B cell (primary cell): ENCODE measurements at regions of chr6 and their contacts with region 1.

Region 1: GRCh38 chr6:43013843-43014433 is at the starts of genes KLHDC3 and MEA1:
- DNase-seq: peak; percentile 99
- ATAC-seq: peak; percentile 97
- H3K4me3 ChIP-seq: peak within 1 kb of the TSS; percentile 61 to 79 (median 70)
- H3K4me3 Mint-ChIP-seq: peak within 1 kb of the TSS; percentile 91
- H3K27ac ChIP-seq: peak within 1 kb of the TSS; percentile 35 to 69
- H3K27ac Mint-ChIP-seq: peak within 1 kb of the TSS; percentile 96
- H3K4me1 ChIP-seq: peaks cover 20 to 23% of the 10 kb centered on the region in 2 donors
- H3K4me1 Mint-ChIP-seq: peaks cover 50% of the 10 kb centered on the region
- H3K27me3 ChIP-seq: no peaks in the 10 kb centered on the region
- H3K27me3 Mint-ChIP-seq: no peaks in the 10 kb centered on the region
- CTCF ChIP-seq: no peak
- total RNA-seq, gene KLHDC3: 50.7 and 52.2 TPM in 2 replicates
- total RNA-seq, gene MEA1: 32.5 and 35.7 TPM in 2 replicates

Region 2: GRCh38 chr6:42978839-42979522 is 35.0 kb before region 1 on chr6 and contains the start of gene PEX6:
- CTCF ChIA-PET with region 1: interaction called, 6 read pairs
- POLR2A ChIA-PET with region 1: interaction called, 14 read pairs
- intact Hi-C with region 1: loop called (anchors 1 kb)
- DNase-seq: peak; percentile 95
- ATAC-seq: peak; percentile 94
- H3K4me3 ChIP-seq: peak within 1 kb of the TSS; percentile 71 to 88 (median 80)
- H3K4me3 Mint-ChIP-seq: peak within 1 kb of the TSS; percentile 98
- H3K27ac ChIP-seq: peak within 1 kb of the TSS; percentile 73 to 85
- H3K27ac Mint-ChIP-seq: peak within 1 kb of the TSS; percentile 98
- H3K4me1 ChIP-seq: peaks cover 19 to 30% of the 10 kb centered on the region in 2 donors
- H3K4me1 Mint-ChIP-seq: peaks cover 38% of the 10 kb centered on the region
- H3K27me3 ChIP-seq: no peaks in the 10 kb centered on the region
- H3K27me3 Mint-ChIP-seq: no peaks in the 10 kb centered on the region
- CTCF ChIP-seq: no peak
- total RNA-seq, gene PEX6: 16.6 and 17.1 TPM in 2 replicates

Region 3: DNA sequence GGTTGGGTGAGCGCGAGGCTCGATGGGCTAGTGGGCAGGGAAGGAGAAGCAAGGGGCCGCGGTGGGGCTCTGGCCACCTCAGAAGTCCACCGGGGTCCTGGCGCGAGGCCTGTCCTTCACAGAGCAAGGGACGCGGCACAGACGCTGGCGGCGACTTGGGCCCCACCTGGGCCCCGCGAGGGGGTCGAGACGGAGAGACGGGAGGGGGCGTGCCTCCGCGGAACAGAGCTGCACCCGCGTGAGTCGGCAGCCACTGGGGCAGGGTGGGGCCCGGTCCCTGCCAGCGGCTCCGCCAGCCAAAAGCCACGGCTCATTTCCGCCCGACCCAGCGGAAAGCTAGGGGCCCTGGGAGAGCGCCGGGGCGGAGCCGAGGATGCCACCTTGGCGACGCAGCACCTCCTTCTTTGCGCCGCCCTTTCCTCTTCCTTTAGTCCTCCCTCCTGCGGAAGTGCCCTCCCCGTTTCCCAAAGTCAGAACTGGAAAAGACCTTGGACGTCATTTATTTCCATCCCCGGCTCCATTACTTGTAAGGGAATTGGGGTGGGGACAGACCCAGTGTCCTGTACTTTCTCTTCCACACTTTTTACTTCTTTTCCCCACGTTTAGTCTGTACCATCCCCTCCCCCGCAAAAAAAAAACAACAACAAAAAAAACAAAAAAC is 39.7 kb after region 1 on chr6 and contains the start of gene CUL7:
- CTCF ChIA-PET with region 1: interaction called, 5 read pairs
- POLR2A ChIA-PET with region 1: interaction called, 12 read pairs
- intact Hi-C with region 1: loop called (anchors 1 kb)
- DNase-seq: peak; percentile 85
- ATAC-seq: peak; percentile 98
- H3K4me3 ChIP-seq: peak within 1 kb of the TSS; percentile 24 to 84 (median 76)
- H3K4me3 Mint-ChIP-seq: peak within 1 kb of the TSS; percentile 94
- H3K27ac ChIP-seq: peak within 1 kb of the TSS; percentile 73 to 85
- H3K27ac Mint-ChIP-seq: peak within 1 kb of the TSS; percentile 95
- H3K4me1 ChIP-seq: peaks cover 22 to 25% of the 10 kb centered on the region in 2 donors
- H3K4me1 Mint-ChIP-seq: peaks cover 37% of the 10 kb centered on the region
- H3K27me3 ChIP-seq: no peaks in the 10 kb centered on the region
- H3K27me3 Mint-ChIP-seq: no peaks in the 10 kb centered on the region
- CTCF ChIP-seq: no peak
- total RNA-seq, gene CUL7: 21.4 and 22.7 TPM in 2 replicates

Region 4: DNA sequence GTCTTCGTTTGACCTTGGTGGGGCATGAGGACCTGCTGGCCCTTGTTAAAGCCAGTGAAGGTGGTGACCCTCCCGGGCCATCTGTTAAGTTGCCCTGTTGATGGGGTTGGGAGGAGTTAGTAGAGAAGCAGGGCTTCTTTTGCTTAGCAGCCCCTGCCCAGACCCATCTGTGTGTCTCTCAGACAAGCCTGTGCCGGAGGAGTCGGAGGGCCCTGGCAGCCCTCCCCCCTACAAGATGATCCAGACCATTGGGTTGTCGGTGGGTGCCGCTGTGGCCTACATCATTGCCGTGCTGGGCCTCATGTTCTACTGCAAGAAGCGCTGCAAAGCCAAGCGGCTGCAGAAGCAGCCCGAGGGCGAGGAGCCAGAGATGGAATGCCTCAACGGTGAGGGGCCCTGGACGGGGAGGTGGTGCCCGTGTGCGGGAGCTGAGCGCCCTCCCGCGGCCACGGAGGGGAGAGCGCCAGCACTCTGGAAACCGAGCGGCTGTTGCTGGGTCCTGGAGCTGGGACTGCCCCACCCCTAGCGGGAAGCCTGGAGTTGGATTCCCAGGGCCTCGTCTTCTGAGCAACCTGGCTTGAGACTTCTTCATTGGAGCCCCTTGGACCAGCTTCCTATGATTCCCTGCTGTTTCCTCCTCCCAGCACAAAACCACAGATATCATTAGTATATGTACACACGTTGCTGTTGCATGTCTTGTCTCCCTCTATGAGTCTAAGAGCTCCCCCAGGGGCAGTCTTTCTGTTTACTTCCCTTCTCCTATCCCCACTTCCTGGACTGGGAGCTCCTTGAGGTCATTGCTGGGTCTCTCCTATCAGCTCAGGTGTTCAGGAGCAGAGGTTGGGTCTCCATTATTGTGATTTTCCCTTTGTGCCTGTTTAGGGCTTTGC is 129.5 kb after region 1 on chr6:
- CTCF ChIA-PET with region 1: interaction called, 19 read pairs
- POLR2A ChIA-PET with region 1: no interaction called
- intact Hi-C with region 1: loop called (anchors 5 kb)
- DNase-seq: peak; percentile 76
- ATAC-seq: peak; percentile 93
- H3K4me3 ChIP-seq: peak overlapping the region in 1 of 5 experiments; percentile 3
- H3K4me3 Mint-ChIP-seq: no peak overlapping the region
- H3K27ac ChIP-seq: no peak overlapping the region
- H3K27ac Mint-ChIP-seq: no peak overlapping the region
- H3K4me1 ChIP-seq: peaks cover 7 to 8% of the 10 kb centered on the region in 2 donors
- H3K4me1 Mint-ChIP-seq: peaks cover 8% of the 10 kb centered on the region
- H3K27me3 ChIP-seq: peaks cover 0 to 4% (median 0%) of the 10 kb centered on the region in 4 experiments
- H3K27me3 Mint-ChIP-seq: peaks cover 9% of the 10 kb centered on the region
- CTCF ChIP-seq: peak; percentile 87

Region 5: GRCh38 chr6:43159599-43159998 is 145.7 kb after region 1 on chr6:
- CTCF ChIA-PET with region 1: no interaction called
- POLR2A ChIA-PET with region 1: no interaction called
- intact Hi-C with region 1: no loop called
- DNase-seq: no peak
- ATAC-seq: no peak
- H3K4me3 ChIP-seq: no peak overlapping the region
- H3K4me3 Mint-ChIP-seq: no peak overlapping the region
- H3K27ac ChIP-seq: no peak overlapping the region
- H3K27ac Mint-ChIP-seq: no peak overlapping the region
- H3K4me1 ChIP-seq: no peaks in the 10 kb centered on the region
- H3K4me1 Mint-ChIP-seq: no peaks in the 10 kb centered on the region
- H3K27me3 ChIP-seq: no peaks in the 10 kb centered on the region
- H3K27me3 Mint-ChIP-seq: no peaks in the 10 kb centered on the region
- CTCF ChIP-seq: no peak

Region 6: DNA sequence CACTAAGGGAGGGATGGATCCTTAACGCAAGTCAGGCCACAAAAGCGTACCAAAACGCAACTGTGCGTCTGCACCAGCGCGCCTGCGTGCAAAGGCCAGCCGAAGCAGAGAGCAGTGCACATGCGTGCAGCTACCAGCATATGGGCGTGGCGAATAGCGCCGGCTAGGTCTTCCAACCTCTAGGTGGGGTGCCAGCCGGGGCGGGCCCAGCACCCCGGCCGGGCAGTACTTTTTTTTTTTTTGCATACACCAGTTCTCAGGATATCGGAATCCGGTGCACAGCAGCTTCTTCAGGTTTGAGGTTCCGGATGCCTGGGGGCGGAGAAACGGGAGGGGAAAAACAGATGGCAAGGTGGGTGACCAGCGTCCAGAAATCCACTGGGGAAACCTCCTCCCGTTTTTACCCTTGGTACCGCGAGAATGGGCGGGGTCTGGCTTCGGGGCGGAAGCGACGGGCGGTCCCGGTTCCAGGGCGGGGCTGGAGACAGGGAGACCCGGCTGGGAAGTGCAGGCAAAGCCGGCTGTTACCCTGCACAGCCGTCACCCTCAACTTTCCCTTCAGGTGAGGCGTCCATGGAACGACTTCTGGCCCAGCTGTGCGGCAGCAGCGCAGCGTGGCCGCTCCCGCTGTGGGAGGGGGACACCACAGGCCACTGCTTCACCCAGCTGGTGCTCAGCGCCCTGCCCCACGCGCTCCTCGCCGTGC is 413.6 kb after region 1 on chr6 and contains the start of gene ABCC10:
- CTCF ChIA-PET with region 1: no interaction called
- POLR2A ChIA-PET with region 1: no interaction called
- intact Hi-C with region 1: loop called (anchors 5 kb)
- DNase-seq: peak; percentile 97
- ATAC-seq: peak; percentile 93
- H3K4me3 ChIP-seq: peak within 1 kb of the TSS; percentile 59 to 93 (median 83)
- H3K4me3 Mint-ChIP-seq: peak within 1 kb of the TSS; percentile 96
- H3K27ac ChIP-seq: peak within 1 kb of the TSS; percentile 72 to 88
- H3K27ac Mint-ChIP-seq: peak within 1 kb of the TSS; percentile 96
- H3K4me1 ChIP-seq: peaks cover 16 to 19% of the 10 kb centered on the region in 2 donors
- H3K4me1 Mint-ChIP-seq: peaks cover 24% of the 10 kb centered on the region
- H3K27me3 ChIP-seq: no peaks in the 10 kb centered on the region
- H3K27me3 Mint-ChIP-seq: no peaks in the 10 kb centered on the region
- CTCF ChIP-seq: peak; percentile 21
- total RNA-seq, gene ABCC10: 71.5 and 84.2 TPM in 2 replicates